SK-N-SH (cell line): ENCODE measurements at regions of chr7 and their contacts with region 1.

Region 1: GRCh38 chr7:50534690-50535290 is 30.4 kb downstream of the DDC start:
- DNase-seq: peak; percentile 67
- H3K4me3 ChIP-seq: no peak overlapping the region
- H3K27ac ChIP-seq: peak overlapping the region; percentile 85 to 99
- H3K4me1 ChIP-seq: peaks cover 8 to 75% of the 10 kb centered on the region in 2 experiments; a peak in 3 of 4 replicates
- H3K27me3 ChIP-seq: 0 out of 2 replicates have a peak, but pooled peaks cover 7% of the 10 kb centered on the region
- CTCF ChIP-seq: peak; percentile 43
- EP300 ChIP-seq: peak; percentile 54 to 67; a peak in 2 of 4 replicates
- RAD21 ChIP-seq: peak; percentile 53

Region 2: GRCh38 chr7:50552921-50553320 is 18.1 kb after region 1 on chr7:
- CTCF ChIA-PET with region 1: interaction called, 10 read pairs
- POLR2A ChIA-PET with region 1: interaction called, 53 read pairs
- DNase-seq: no peak
- H3K4me3 ChIP-seq: no peak overlapping the region
- H3K27ac ChIP-seq: peak overlapping the region in 1 of 2 experiments; percentile 17; a peak in 1 of 4 replicates
- H3K4me1 ChIP-seq: peaks cover 0 to 44% of the 10 kb centered on the region in 2 experiments; a peak in 2 of 4 replicates
- H3K27me3 ChIP-seq: peaks cover 28% of the 10 kb centered on the region
- CTCF ChIP-seq: no peak
- EP300 ChIP-seq: no peak
- RAD21 ChIP-seq: no peak

Region 3: DNA sequence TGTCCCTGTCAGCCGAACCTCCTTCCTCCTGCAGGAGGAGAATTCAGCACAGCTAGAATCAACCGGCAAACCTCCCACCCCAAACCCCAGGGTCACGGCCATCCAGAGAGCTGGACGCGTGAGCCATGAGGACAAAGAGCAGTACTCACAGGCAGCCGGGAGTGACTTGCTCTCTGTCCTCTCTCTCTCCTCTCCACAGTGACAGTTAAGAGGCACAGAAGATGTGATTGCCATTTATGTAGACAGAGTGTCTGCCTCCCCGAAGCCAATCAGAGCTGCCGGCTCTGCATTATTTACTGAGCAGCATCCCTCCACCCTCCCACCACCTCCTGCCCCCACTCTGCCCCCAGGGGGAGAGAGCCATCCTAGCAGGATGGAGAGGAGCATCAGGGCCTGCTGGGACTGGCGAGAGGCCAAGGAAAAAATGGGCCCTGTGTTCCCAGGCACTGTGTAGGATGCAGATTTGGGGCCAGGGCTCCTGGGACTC is 26.1 kb after region 1 on chr7:
- CTCF ChIA-PET with region 1: interaction called, 23 read pairs
- POLR2A ChIA-PET with region 1: interaction called, 53 read pairs
- DNase-seq: peak; percentile 91
- H3K4me3 ChIP-seq: peak overlapping the region; percentile 28 to 55; a peak in 3 of 4 replicates
- H3K27ac ChIP-seq: peak overlapping the region in 1 of 2 experiments; percentile 99; a peak in 2 of 4 replicates
- H3K4me1 ChIP-seq: peaks cover 0 to 66% of the 10 kb centered on the region in 2 experiments; a peak in 2 of 4 replicates
- H3K27me3 ChIP-seq: peaks cover 60% of the 10 kb centered on the region
- CTCF ChIP-seq: no peak
- EP300 ChIP-seq: peak in 1 of 2 experiments; percentile 85; a peak in 2 of 4 replicates
- RAD21 ChIP-seq: peak; percentile 25

Region 4: GRCh38 chr7:50687575-50688225 is 152.9 kb after region 1 on chr7:
- CTCF ChIA-PET with region 1: no interaction called
- POLR2A ChIA-PET with region 1: no interaction called
- DNase-seq: no peak
- H3K4me3 ChIP-seq: no peak overlapping the region
- H3K27ac ChIP-seq: no peak overlapping the region
- H3K4me1 ChIP-seq: peaks cover 0 to 10% of the 10 kb centered on the region in 2 experiments; a peak in 1 of 4 replicates
- H3K27me3 ChIP-seq: no peaks in the 10 kb centered on the region
- CTCF ChIP-seq: no peak
- EP300 ChIP-seq: no peak
- RAD21 ChIP-seq: no peak